Sciatic nerve (tissue), 2 donors: ENCODE measurements at regions of chr1 and their contacts with region 1.

Region 1: GRCh38 chr1:205435578-205436573 is 14.0 kb upstream of the LEMD1 start:
- DNase-seq: peak; percentile 44
- ATAC-seq: no peak

Region 2: GRCh38 chr1:204494281-204495077 is 941.4 kb before region 1 on chr1 and contains the start of gene PIK3C2B:
- intact Hi-C with region 1: no loop called
- DNase-seq: peak; percentile 88
- ATAC-seq: peak; percentile 91
- total RNA-seq, gene PIK3C2B: 52.2 TPM

Region 3: DNA sequence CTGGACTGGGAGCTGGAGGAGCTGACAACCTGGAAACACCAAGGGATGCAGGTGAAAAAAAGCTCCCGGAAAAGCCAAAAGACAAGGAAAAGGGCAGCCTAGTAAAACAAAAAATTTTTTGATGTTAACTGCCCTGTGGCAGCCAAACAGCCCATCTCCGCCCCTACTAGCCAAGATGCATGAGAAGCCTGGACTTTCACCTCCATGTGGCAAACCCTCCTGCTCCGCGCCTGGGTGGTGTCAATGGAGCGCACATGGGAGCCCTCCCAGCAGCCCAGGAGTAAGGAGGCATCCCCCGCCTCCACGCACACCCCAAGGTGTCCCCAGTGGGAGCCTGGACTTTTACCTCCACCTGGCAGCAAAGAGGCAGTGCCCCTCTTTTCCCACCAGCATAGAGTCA is 44.5 kb before region 1 on chr1:
- intact Hi-C with region 1: no loop called
- DNase-seq: no peak
- ATAC-seq: no peak

Region 4: DNA sequence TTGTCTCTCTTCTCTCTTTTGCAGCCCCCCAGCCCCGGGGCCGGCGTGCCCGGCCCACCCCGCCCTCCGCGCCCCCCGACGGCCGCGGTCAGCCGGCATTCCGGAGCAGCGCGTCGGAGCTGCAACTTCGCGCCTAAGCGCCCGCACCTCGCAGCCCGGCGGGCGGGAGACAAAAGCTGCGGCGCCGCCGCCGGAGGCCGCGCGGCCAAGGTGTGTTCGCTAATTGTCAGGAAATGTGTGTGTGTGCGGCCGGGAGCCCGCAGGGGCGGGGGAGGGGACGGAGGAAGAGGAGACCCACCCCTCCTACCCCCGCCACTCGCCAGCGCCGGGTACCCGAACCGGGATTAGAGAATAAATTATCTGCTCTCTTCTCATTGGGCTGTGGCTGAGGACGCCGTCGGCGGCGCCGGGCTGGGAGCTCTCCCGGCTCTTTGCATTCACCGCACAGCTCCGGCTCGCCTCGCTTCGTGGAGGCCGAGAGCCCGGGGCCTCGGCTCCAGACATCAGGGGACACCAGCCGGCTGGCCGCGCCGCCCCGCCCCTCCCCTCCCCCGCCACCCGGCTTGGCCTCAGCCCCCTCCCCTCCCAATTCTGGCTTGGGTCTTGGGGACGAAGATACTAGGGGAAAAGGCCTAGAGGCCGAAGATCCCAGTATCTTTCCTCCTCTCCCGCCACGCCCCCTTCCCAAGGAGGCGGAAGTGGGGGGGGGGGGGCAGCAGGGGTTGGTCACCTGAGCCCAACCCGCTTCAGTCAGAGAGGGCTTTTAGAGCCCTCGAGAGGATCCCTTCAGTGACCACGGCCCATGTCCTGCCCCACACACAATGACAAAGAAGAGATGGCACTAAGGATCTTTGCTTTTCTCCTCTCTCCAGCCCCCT is 21.2 kb after region 1 on chr1:
- intact Hi-C with region 1: loop called (anchors 1 kb)
- DNase-seq: no peak
- ATAC-seq: no peak

Region 5: DNA sequence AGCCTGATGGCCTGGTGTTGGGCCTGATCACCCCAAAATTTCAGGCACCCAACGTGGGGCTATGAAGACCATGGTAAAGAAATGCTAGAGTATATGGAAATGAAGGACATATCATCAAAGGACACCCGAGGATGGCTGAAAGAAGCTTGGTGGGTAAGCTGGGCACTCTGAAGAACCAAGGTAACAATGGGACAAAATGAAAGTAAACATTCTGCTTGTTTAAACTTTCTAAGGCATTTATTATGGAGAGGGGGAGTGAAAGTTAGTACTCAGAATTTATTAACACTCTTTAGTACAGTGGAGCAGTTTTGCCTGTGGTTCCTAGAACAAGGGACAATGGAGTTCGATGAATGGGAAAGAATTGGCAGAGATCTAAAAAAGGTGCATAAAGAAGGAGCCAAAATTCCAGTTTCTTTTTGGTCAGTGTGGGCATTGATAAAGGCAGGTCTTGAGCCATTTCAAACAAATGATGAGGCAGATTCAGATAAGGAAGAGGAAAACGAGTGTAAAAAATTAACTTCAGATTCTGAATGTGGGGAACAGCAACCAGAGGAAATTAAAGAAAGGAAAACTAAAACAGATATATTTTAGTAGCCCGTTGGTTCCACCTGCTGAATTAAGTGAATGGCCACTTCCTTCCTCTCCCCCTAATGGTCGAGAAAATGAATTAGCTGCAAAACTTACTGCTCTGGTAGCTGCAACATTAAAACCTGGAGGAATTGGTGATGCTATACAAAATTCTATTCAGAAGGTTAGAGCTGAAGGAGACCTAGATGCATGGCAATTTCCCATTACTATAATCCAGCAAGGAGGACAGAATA is 422.5 kb after region 1 on chr1:
- intact Hi-C with region 1: no loop called
- DNase-seq: no peak
- ATAC-seq: no peak